Activated B cell treated with CpG ODN at 0.5 μM for 24 hours (primary cell): ENCODE measurements at regions of chr19 and their contacts with region 1.

Region 1: DNA sequence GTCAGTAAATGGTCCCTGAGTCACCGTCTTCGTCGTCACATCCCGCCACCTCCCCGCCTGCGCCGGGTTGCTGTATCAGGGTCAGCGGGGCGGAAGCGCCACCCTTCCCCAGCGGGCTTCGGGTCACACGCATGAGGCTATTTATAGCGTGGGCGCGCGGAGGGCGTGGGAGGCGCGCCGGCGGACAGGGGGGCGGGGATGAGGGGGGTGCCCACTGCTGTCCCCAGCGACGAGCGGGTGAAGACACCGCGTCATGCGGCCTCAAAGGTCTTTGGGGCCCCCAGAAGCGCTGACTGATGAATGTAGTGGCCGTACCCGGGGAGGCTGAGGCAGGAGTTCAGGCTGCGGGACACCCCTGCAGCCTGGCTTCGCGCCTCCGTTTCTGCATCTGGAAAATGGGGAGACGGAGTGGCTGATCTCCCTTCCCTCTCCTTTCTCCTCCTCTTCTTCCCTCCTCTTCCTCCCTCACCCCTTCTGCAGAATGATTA is 7.9 kb downstream of the UNC13A start:
- DNase-seq: peak; percentile 61
- ATAC-seq: peak; percentile 90
- H3K4me3 Mint-ChIP-seq: peak overlapping the region; percentile 73
- H3K27ac Mint-ChIP-seq: peak overlapping the region; percentile 30
- H3K4me1 Mint-ChIP-seq: peaks cover 14% of the 10 kb centered on the region
- H3K27me3 Mint-ChIP-seq: peaks cover 55% of the 10 kb centered on the region
- CTCF ChIP-seq: no peak

Region 2: GRCh38 chr19:17623224-17623935 is 56.9 kb before region 1 on chr19:
- CTCF ChIA-PET with region 1: no interaction called
- POLR2A ChIA-PET with region 1: no interaction called
- intact Hi-C with region 1: loop called (anchors 10 kb)
- DNase-seq: no peak
- ATAC-seq: no peak
- H3K4me3 Mint-ChIP-seq: no peak overlapping the region
- H3K27ac Mint-ChIP-seq: no peak overlapping the region
- H3K4me1 Mint-ChIP-seq: no peaks in the 10 kb centered on the region
- H3K27me3 Mint-ChIP-seq: peaks cover 16% of the 10 kb centered on the region
- CTCF ChIP-seq: no peak

Region 3: DNA sequence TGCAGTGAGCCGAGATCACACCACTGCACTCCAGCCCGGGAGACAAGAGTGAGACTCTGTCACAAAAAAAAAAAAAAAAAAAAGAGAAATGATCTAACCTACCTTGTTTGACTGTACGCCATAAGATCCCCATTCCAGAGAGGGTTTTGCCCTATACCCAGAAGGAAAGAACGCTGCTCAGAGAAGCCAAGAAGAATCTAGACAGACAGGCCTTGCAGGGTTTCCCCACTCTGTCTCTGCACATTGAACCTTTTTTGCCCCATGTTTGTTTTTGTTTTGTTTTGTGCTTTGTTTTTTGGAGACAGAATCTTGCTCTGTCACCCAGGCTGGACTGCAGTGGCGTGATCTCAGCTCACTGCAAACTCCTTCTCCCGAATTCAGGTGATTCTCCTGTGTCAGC is 31.6 kb after region 1 on chr19:
- CTCF ChIA-PET with region 1: no interaction called
- POLR2A ChIA-PET with region 1: no interaction called
- intact Hi-C with region 1: no loop called
- DNase-seq: no peak
- ATAC-seq: no peak
- H3K4me3 Mint-ChIP-seq: no peak overlapping the region
- H3K27ac Mint-ChIP-seq: no peak overlapping the region
- H3K4me1 Mint-ChIP-seq: no peaks in the 10 kb centered on the region
- H3K27me3 Mint-ChIP-seq: no peaks in the 10 kb centered on the region
- CTCF ChIP-seq: no peak